H1 (cell line): ENCODE measurements at regions of chr2 and their contacts with region 1.

Region 1: DNA sequence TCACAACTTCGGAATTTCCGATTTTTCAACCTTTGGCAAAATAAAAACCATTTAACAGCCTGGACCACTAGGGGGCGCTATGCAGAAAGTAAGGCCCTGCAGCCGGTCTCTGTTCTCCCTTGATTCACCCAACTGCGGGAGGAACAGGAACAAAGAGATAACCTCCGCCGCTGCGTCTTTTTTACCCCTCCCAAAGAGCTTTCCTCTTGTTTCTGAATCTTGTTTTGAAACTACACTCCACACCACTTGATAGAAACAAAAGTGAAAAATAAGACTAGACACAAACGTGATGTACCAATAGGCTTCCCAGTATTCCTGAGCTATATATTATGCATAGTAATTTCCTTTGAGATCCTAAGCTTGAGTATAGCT is 231.2 kb downstream of the MYO3B start:
- DNase-seq: peak; percentile 19 to 86
- H3K4me3 ChIP-seq: peak overlapping the region in 1 of 4 experiments; percentile 16; a peak in 1 of 8 replicates
- H3K27ac ChIP-seq: no peak overlapping the region
- H3K4me1 ChIP-seq: no peaks in the 10 kb centered on the region
- H3K27me3 ChIP-seq: no peaks in the 10 kb centered on the region
- CTCF ChIP-seq: peak; percentile 47 to 75 (median 69)
- EP300 ChIP-seq: no peak
- POLR2A ChIP-seq: no peak
- RAD21 ChIP-seq: peak; percentile 73 to 80

Region 2: DNA sequence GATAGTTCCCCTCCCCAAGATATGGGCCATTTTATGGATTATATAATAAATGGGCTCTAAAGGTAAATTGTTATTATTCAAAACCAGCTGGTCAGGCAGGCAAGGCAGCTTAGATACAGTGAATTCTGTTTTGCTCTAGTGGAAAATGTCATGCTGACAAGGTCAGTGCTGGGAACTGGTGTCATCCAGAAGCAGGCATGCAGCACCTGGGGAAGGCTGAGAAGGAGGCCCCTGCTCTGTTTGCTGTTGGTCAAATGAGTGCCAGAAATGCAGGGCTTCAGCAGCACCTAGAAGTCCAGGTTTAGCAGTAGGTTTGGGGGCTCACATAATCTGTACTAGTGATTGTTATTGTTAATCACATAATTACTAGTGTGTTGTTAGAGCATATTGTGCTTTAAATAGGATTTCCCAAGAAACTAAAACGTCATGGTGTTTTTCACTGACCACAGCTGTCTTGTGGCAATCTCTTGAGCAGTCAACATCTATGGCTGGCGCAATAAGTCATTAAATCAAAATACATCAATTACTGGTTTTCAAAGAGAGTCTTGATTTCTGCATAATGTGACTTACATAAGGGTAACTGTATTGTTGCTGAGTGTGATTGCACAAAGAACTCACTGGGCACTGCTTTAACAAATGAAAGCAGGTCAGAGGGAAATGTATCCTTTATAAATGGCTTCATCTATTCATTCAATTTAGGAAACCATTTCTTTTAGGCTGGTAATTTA is 132.1 kb before region 1 on chr2:
- CTCF ChIA-PET with region 1: no interaction called
- POLR2A ChIA-PET with region 1: no interaction called
- DNase-seq: no peak
- H3K4me3 ChIP-seq: no peak overlapping the region
- H3K27ac ChIP-seq: no peak overlapping the region
- H3K4me1 ChIP-seq: no peaks in the 10 kb centered on the region
- H3K27me3 ChIP-seq: no peaks in the 10 kb centered on the region
- CTCF ChIP-seq: no peak
- EP300 ChIP-seq: no peak
- POLR2A ChIP-seq: no peak
- RAD21 ChIP-seq: no peak

Region 3: DNA sequence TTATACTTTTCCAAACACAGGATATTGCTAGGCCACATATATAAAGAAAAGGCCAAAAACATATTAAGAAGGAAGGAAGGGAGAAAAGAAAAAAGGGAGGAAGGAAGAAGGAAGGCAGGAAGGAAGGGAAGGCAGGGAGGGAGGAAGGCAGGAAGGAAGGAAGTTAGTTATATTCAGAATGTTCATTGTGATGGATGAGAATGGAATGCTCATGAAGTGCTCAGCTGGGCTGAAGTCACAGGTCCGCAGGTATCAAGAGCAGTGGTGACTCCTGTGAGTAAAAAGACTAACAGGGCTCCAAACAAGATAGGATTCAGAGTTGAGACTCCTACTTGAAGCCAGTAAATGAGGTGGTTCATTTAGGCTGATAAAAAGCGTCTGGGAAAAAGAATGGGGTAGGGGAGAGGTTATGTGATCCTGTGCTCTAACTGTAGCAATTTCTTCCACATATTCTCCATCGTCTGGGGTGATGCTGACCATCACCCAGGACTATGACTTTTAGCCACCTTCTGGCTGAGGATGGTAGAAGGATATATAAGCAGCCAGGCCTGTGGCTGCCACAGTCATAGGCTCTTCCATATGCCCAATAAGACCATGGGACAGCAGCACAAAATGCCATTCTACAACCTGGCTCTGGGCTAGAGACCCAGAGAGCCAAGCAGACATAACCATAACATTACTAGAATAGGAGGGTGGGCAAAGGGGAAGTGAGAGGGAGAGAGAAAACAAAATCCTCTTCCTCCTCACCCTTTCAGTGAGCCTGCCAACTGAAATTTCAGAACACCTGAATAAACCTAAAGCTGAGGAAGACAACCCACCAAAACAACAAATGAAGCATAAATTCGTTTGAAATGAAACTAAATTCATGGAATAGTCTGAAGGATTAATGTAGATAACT is 58.0 kb before region 1 on chr2:
- CTCF ChIA-PET with region 1: no interaction called
- POLR2A ChIA-PET with region 1: no interaction called
- DNase-seq: no peak
- H3K4me3 ChIP-seq: no peak overlapping the region
- H3K27ac ChIP-seq: no peak overlapping the region
- H3K4me1 ChIP-seq: peaks cover 0 to 13% (median 9%) of the 10 kb centered on the region in 4 experiments; a peak in 3 of 7 replicates
- H3K27me3 ChIP-seq: no peaks in the 10 kb centered on the region
- CTCF ChIP-seq: peak in 1 of 3 experiments; percentile 2; a peak in 1 of 4 replicates
- EP300 ChIP-seq: no peak
- POLR2A ChIP-seq: no peak
- RAD21 ChIP-seq: no peak; a peak in 1 of 4 replicates

Region 4: GRCh38 chr2:170361090-170361936 is 47.8 kb before region 1 on chr2:
- CTCF ChIA-PET with region 1: interaction called, 19 read pairs
- POLR2A ChIA-PET with region 1: no interaction called
- DNase-seq: peak; percentile 21 to 69
- H3K4me3 ChIP-seq: no peak overlapping the region
- H3K27ac ChIP-seq: no peak overlapping the region
- H3K4me1 ChIP-seq: peaks cover 0 to 7% (median 2%) of the 10 kb centered on the region in 4 experiments; a peak in 3 of 7 replicates
- H3K27me3 ChIP-seq: no peaks in the 10 kb centered on the region
- CTCF ChIP-seq: peak; percentile 32 to 85 (median 72)
- EP300 ChIP-seq: no peak
- POLR2A ChIP-seq: no peak
- RAD21 ChIP-seq: peak; percentile 74 to 84

Region 5: GRCh38 chr2:170391018-170391417 is 18.1 kb before region 1 on chr2:
- CTCF ChIA-PET with region 1: interaction called, 26 read pairs
- POLR2A ChIA-PET with region 1: no interaction called
- DNase-seq: no peak
- H3K4me3 ChIP-seq: no peak overlapping the region
- H3K27ac ChIP-seq: no peak overlapping the region
- H3K4me1 ChIP-seq: no peaks in the 10 kb centered on the region
- H3K27me3 ChIP-seq: no peaks in the 10 kb centered on the region
- CTCF ChIP-seq: no peak
- EP300 ChIP-seq: no peak
- POLR2A ChIP-seq: no peak
- RAD21 ChIP-seq: no peak

Region 6: DNA sequence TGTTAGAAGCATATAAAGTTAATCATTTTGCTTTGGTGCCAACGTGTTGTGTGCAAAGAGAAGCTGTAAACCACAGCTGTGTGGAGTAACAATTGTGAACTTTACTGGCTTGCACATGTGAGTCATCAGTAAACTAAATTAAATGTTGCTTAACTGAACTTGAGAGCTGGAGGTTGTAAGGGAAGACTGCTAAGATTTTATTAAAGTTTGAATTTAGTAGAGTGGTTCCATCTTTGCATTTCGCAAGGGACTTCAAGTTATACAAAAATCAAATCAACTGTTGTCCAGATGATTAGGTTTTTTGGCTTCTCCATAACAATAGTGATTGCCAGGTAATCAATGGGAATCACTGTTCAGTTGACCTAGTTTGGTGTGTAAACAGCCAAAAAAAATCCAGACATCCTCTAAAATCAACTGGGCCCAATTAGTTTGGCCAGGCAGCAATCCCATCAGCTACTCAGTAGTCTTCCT is 16.2 kb after region 1 on chr2:
- CTCF ChIA-PET with region 1: interaction called, 19 read pairs
- POLR2A ChIA-PET with region 1: no interaction called
- DNase-seq: no peak
- H3K4me3 ChIP-seq: no peak overlapping the region
- H3K27ac ChIP-seq: no peak overlapping the region
- H3K4me1 ChIP-seq: no peaks in the 10 kb centered on the region
- H3K27me3 ChIP-seq: no peaks in the 10 kb centered on the region; a peak in 1 of 7 replicates
- CTCF ChIP-seq: no peak
- EP300 ChIP-seq: no peak
- POLR2A ChIP-seq: no peak
- RAD21 ChIP-seq: no peak

Region 7: DNA sequence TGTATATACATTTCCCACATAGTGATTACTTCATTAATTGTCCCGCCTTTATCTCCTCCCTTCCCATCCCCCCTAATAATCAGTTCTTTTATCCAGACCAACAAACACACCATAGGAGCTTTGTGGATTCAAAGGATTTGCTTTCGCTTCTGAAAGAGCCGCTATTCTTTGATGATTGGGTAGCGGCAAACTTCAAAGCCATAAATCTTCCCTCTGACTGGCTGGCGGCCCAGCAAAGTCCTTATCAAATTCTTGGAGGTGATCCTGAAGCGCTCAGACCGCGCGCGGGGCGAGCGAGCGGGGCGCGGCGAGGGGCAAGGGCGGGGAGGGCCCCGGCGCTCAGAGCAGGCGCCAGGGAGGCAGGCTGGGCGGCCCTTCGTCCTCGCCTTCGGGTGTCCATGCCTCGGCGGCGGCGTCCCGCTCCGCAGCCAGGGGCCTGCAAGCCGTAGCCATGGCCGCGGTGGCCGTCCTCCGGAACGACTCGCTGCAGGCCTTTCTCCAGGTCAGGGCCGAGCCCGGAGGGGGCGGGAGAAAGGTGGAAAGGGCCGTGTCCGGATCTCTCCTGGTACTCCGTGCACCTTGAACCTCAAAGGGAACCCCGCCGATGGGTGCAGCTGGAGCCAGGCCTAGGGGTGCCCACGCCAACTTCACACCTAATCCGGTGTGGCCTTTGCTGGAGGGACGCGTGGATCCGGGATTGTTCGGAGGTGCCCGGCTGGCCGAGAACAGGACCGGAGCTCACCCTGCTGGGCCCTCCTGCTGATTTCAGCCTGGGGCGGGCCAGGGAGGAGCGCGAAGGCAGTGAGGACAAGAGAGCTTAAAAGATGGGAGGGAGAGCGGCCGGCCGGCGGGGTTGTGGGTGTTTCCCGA is 306.1 kb after region 1 on chr2 and contains the start of gene SP5:
- CTCF ChIA-PET with region 1: interaction called, 12 read pairs
- POLR2A ChIA-PET with region 1: no interaction called
- DNase-seq: peak; percentile 46 to 83
- H3K4me3 ChIP-seq: peak within 1 kb of the TSS; percentile 12 to 55 (median 28)
- H3K27ac ChIP-seq: no peak within 1 kb of the TSS
- H3K4me1 ChIP-seq: peaks cover 5 to 50% (median 26%) of the 10 kb centered on the region in 4 experiments
- H3K27me3 ChIP-seq: peaks cover 66 to 98% (median 93%) of the 10 kb centered on the region in 4 experiments
- CTCF ChIP-seq: no peak
- EP300 ChIP-seq: no peak
- POLR2A ChIP-seq: no peak
- RAD21 ChIP-seq: no peak
- total RNA-seq, gene SP5: 0.31 TPM in 1 of 2 replicates, not detected in the other

Region 8: GRCh38 chr2:170940066-170940465 is 530.9 kb after region 1 on chr2:
- CTCF ChIA-PET with region 1: no interaction called
- POLR2A ChIA-PET with region 1: no interaction called
- DNase-seq: no peak
- H3K4me3 ChIP-seq: no peak overlapping the region
- H3K27ac ChIP-seq: no peak overlapping the region
- H3K4me1 ChIP-seq: no peaks in the 10 kb centered on the region
- H3K27me3 ChIP-seq: no peaks in the 10 kb centered on the region
- CTCF ChIP-seq: no peak
- EP300 ChIP-seq: no peak
- POLR2A ChIP-seq: no peak
- RAD21 ChIP-seq: no peak